ENCODE measurements at regions of chr13 and their contacts with region 1.

Region 1: GRCh38 chr13:51797664-51798488 is 6.1 kb downstream of the DHRS12 start:
- DNase-seq: peak in 8 of 9 donors; percentile 41 to 78 (median 66)
- ATAC-seq: peak; percentile 64
- H3K4me3 ChIP-seq: no peak overlapping the region
- H3K4me3 Mint-ChIP-seq: peak overlapping the region in 1 of 10 donors; percentile 13
- H3K27ac ChIP-seq: no peak overlapping the region
- H3K27ac Mint-ChIP-seq: peak overlapping the region in 8 of 9 donors; percentile 22 to 90 (median 69)
- H3K4me1 ChIP-seq: peaks cover 15% of the 10 kb centered on the region in 2 donors
- H3K4me1 Mint-ChIP-seq: peaks cover 19 to 42% (median 35%) of the 10 kb centered on the region in 7 donors
- H3K27me3 ChIP-seq: no peaks in the 10 kb centered on the region
- H3K27me3 Mint-ChIP-seq: no peaks in the 10 kb centered on the region

Region 2: DNA sequence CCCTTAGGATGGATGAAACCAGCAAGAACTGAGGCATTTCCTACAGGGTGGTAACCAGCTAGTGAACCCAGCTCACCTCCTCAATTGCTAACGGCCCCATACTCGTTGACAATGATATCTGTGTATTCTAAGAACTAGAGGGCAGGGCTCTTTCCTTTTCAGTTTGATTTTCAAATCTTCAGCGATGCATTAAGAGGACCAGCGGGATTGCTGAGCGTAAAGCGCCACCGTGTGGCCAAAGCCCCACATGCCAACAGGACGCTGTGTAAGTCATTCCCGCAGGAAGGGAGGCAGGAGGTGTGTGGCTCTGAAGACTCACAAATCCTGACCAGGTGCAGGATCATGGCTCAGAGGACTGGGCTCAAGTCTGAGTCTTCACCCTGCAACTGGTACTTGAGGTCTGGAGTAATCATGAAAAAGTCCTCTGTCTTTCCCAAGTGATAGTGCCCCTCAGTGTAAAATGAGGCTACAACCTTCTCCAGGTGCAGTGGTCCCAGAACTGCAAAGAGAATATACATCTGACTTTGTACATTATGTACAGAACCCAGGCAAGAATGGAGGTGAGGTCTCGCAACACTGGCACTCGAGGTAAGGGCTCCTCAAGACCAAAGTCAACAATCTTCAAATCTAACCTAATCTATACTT is 727.7 kb before region 1 on chr13:
- CTCF ChIA-PET with region 1: no interaction called
- POLR2A ChIA-PET with region 1: no interaction called
- intact Hi-C with region 1: loop called in 1 of 2 experiments (anchors 1 kb)
- DNase-seq: peak; percentile 43 to 75 (median 66)
- ATAC-seq: peak; percentile 83
- H3K4me3 ChIP-seq: no peak overlapping the region
- H3K4me3 Mint-ChIP-seq: peak overlapping the region in 2 of 10 donors; percentile 7 to 27
- H3K27ac ChIP-seq: no peak overlapping the region
- H3K27ac Mint-ChIP-seq: peak overlapping the region in 1 of 9 donors; percentile 76
- H3K4me1 ChIP-seq: no peaks in the 10 kb centered on the region
- H3K4me1 Mint-ChIP-seq: peaks cover 0 to 37% (median 7%) of the 10 kb centered on the region in 7 donors
- H3K27me3 ChIP-seq: no peaks in the 10 kb centered on the region
- H3K27me3 Mint-ChIP-seq: peaks cover 10 to 25% (median 16%) of the 10 kb centered on the region in 5 donors

Region 3: GRCh38 chr13:51222037-51222685 is 575.7 kb before region 1 on chr13 and contains the start of gene FAM124A:
- CTCF ChIA-PET with region 1: no interaction called
- POLR2A ChIA-PET with region 1: no interaction called
- intact Hi-C with region 1: loop called in 1 of 2 experiments (anchors 2 kb)
- DNase-seq: peak in 7 of 9 donors; percentile 9 to 75 (median 21)
- ATAC-seq: peak; percentile 85
- H3K4me3 ChIP-seq: peak within 1 kb of the TSS; percentile 31
- H3K4me3 Mint-ChIP-seq: peak within 1 kb of the TSS; percentile 64 to 82 (median 78)
- H3K27ac ChIP-seq: no peak within 1 kb of the TSS
- H3K27ac Mint-ChIP-seq: no peak within 1 kb of the TSS
- H3K4me1 ChIP-seq: peaks cover 0 to 4% of the 10 kb centered on the region in 2 donors
- H3K4me1 Mint-ChIP-seq: peaks cover 0 to 12% (median 0%) of the 10 kb centered on the region in 7 donors
- H3K27me3 ChIP-seq: peaks cover 4 to 10% of the 10 kb centered on the region in 2 donors
- H3K27me3 Mint-ChIP-seq: peaks cover 42 to 62% (median 54%) of the 10 kb centered on the region in 5 donors
- total RNA-seq, gene FAM124A: 0.12 to 0.85 TPM in 2 of 5 experiments, not detected in the others

Region 4: DNA sequence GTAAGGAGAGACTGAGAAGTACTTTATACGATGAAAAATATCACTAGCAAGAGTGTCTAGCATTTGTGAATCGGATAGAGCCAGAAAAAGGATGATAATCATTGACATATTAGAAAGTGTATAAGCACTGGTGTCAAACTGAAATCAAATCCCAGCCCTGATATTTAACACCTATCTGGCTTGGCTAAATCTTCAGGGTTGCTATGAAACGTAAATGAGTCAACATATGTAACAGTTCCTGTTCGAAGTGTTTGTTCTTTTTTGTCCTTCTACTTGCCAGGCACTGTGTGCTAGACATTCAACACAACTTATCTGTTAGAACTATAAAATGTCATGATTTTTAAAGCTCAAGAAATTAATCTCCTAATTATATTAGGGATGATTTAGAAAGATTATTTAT is 417.6 kb before region 1 on chr13:
- CTCF ChIA-PET with region 1: no interaction called
- POLR2A ChIA-PET with region 1: no interaction called
- intact Hi-C with region 1: loop called in 1 of 2 experiments (anchors 5 kb)
- DNase-seq: no peak
- ATAC-seq: no peak
- H3K4me3 ChIP-seq: no peak overlapping the region
- H3K4me3 Mint-ChIP-seq: no peak overlapping the region
- H3K27ac ChIP-seq: no peak overlapping the region
- H3K27ac Mint-ChIP-seq: peak overlapping the region in 3 of 9 donors; percentile 13 to 58 (median 33)
- H3K4me1 ChIP-seq: no peaks in the 10 kb centered on the region
- H3K4me1 Mint-ChIP-seq: peaks cover 0 to 4% (median 0%) of the 10 kb centered on the region in 7 donors
- H3K27me3 ChIP-seq: no peaks in the 10 kb centered on the region
- H3K27me3 Mint-ChIP-seq: no peaks in the 10 kb centered on the region

Region 5: GRCh38 chr13:51444922-51445321 is 353.0 kb before region 1 on chr13:
- CTCF ChIA-PET with region 1: interaction called, 24 read pairs
- POLR2A ChIA-PET with region 1: interaction called, 130 read pairs
- intact Hi-C with region 1: loop called in 1 of 2 experiments (anchors 1 kb)
- DNase-seq: peak in 6 of 9 donors; percentile 14 to 46 (median 22)
- ATAC-seq: peak; percentile 46
- H3K4me3 ChIP-seq: no peak overlapping the region
- H3K4me3 Mint-ChIP-seq: no peak overlapping the region
- H3K27ac ChIP-seq: no peak overlapping the region
- H3K27ac Mint-ChIP-seq: no peak overlapping the region
- H3K4me1 ChIP-seq: peaks cover under 1 to 9% of the 10 kb centered on the region in 2 donors
- H3K4me1 Mint-ChIP-seq: peaks cover 6 to 42% (median 24%) of the 10 kb centered on the region in 7 donors
- H3K27me3 ChIP-seq: no peaks in the 10 kb centered on the region
- H3K27me3 Mint-ChIP-seq: no peaks in the 10 kb centered on the region

Region 6: GRCh38 chr13:51770681-51771417 is 27.0 kb before region 1 on chr13:
- CTCF ChIA-PET with region 1: no interaction called
- POLR2A ChIA-PET with region 1: no interaction called
- intact Hi-C with region 1: no loop called
- DNase-seq: no peak
- ATAC-seq: peak; percentile 16
- H3K4me3 ChIP-seq: no peak overlapping the region
- H3K4me3 Mint-ChIP-seq: no peak overlapping the region
- H3K27ac ChIP-seq: no peak overlapping the region
- H3K27ac Mint-ChIP-seq: peak overlapping the region in 5 of 9 donors; percentile 39 to 71 (median 48)
- H3K4me1 ChIP-seq: no peaks in the 10 kb centered on the region
- H3K4me1 Mint-ChIP-seq: peaks cover 0 to 10% (median 7%) of the 10 kb centered on the region in 7 donors
- H3K27me3 ChIP-seq: no peaks in the 10 kb centered on the region
- H3K27me3 Mint-ChIP-seq: no peaks in the 10 kb centered on the region

Region 7: DNA sequence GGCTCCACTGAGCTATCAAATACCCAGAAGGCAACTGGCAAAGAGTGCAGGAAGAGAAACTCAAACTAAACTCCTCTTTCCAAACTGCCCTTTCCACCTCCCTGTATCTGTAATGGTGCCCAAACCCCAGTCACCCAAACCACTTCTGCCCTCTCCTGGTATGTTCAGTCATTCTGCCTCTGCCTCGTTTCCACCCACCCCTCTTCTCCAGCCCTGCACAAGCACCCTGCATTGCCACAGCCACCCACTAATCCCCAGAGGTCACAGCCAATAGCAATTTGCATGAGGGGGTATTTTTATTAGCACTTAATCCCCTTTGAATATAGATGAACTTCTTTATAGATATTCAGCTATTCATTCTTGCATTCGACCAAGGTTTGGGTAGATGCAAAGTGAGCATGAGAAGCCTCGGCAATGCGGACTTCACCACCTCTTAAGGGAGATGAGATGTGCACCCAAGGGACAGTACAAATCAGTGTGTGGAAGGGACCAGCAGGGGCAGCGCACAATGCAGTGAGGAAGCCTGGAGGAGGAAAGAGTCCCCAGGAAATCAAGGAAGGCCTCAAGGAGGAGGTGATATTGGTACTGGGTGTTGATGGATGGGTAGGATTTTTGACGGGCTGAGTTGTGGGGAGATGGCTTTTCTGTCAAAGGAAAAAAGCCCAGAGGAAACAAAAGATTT is 34.7 kb after region 1 on chr13:
- CTCF ChIA-PET with region 1: interaction called, 17 read pairs
- POLR2A ChIA-PET with region 1: interaction called, 118 read pairs
- intact Hi-C with region 1: loop called in 1 of 2 experiments (anchors 5 kb)
- DNase-seq: peak in 7 of 9 donors; percentile 68 to 82 (median 76)
- ATAC-seq: peak; percentile 98
- H3K4me3 ChIP-seq: no peak overlapping the region
- H3K4me3 Mint-ChIP-seq: peak overlapping the region in 9 of 10 donors; percentile 37 to 77 (median 55)
- H3K27ac ChIP-seq: no peak overlapping the region
- H3K27ac Mint-ChIP-seq: peak overlapping the region in 8 of 9 donors; percentile 68 to 99 (median 78)
- H3K4me1 ChIP-seq: peaks cover 4 to 33% of the 10 kb centered on the region in 2 donors
- H3K4me1 Mint-ChIP-seq: peaks cover 28 to 54% (median 51%) of the 10 kb centered on the region in 7 donors
- H3K27me3 ChIP-seq: no peaks in the 10 kb centered on the region
- H3K27me3 Mint-ChIP-seq: peaks cover 0 to 8% (median 0%) of the 10 kb centered on the region in 5 donors

Region 8: GRCh38 chr13:53200498-53201453 is 1402.9 kb after region 1 on chr13:
- CTCF ChIA-PET with region 1: no interaction called
- POLR2A ChIA-PET with region 1: no interaction called
- intact Hi-C with region 1: no loop called
- DNase-seq: peak in 1 of 9 donors; percentile 29
- ATAC-seq: no peak
- H3K4me3 ChIP-seq: no peak overlapping the region
- H3K4me3 Mint-ChIP-seq: no peak overlapping the region
- H3K27ac ChIP-seq: no peak overlapping the region
- H3K27ac Mint-ChIP-seq: no peak overlapping the region
- H3K4me1 ChIP-seq: no peaks in the 10 kb centered on the region
- H3K4me1 Mint-ChIP-seq: peaks cover 0 to 10% (median 0%) of the 10 kb centered on the region in 7 donors
- H3K27me3 ChIP-seq: no peaks in the 10 kb centered on the region
- H3K27me3 Mint-ChIP-seq: peaks cover 7 to 44% (median 38%) of the 10 kb centered on the region in 5 donors

Measured in naive thymus-derived CD4-positive, alpha-beta T cell (primary cell).